K562 (cell line): ENCODE measurements at regions of chr5 and their contacts with region 1.

Region 1: DNA sequence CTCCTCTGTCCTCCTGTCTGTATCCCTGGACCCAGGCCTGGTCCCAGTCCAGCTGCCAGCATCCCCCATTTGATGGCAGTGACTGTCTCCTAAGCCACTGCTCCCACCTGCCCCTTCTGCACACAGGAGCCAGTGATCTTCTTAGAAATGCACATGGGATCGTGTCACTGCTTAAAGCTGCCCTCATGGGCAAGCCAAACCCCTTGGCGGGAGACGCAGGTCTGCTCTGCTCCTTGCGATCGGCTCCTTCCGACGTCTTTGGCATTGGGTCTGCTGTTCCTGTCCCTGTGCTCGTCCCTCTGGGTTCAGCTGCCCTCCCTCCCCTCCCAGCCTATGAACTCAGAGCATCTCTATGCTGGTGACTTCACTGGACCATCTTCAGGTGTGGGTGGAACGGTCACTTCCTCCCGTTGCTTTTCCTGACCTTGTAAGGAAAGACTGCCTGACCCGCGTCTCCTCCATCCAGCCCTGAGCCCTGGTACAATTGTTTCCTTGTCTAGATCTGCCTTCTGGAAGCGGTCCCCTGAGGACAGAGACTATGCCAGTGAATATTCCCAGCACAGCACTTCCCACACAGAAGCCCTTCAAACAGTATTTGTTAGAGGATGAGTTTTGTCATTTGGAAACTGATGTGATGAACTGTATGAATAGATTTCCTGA is 116.5 kb downstream of the ZNF354C start:
- DNase-seq: no peak
- ATAC-seq: no peak
- H3K4me3 ChIP-seq: no peak overlapping the region
- H3K27ac ChIP-seq: no peak overlapping the region
- H3K4me1 ChIP-seq: no peaks in the 10 kb centered on the region
- H3K27me3 ChIP-seq: peaks cover 9 to 43% of the 10 kb centered on the region in 2 experiments
- CTCF ChIP-seq: no peak
- EP300 ChIP-seq: no peak
- POLR2A ChIP-seq: no peak
- RAD21 ChIP-seq: no peak

Region 2: GRCh38 chr5:179355976-179356974 is 179.6 kb after region 1 on chr5:
- CTCF ChIA-PET with region 1: no interaction called
- POLR2A ChIA-PET with region 1: no interaction called
- in situ Hi-C with region 1: no loop called
- intact Hi-C with region 1: no loop called
- DNase-seq: no peak
- ATAC-seq: no peak
- H3K4me3 ChIP-seq: no peak overlapping the region
- H3K27ac ChIP-seq: no peak overlapping the region
- H3K4me1 ChIP-seq: no peaks in the 10 kb centered on the region
- H3K27me3 ChIP-seq: peaks cover 4 to 33% of the 10 kb centered on the region in 2 experiments; a peak in 3 of 5 replicates
- CTCF ChIP-seq: no peak
- EP300 ChIP-seq: no peak
- POLR2A ChIP-seq: no peak
- RAD21 ChIP-seq: no peak

Region 3: DNA sequence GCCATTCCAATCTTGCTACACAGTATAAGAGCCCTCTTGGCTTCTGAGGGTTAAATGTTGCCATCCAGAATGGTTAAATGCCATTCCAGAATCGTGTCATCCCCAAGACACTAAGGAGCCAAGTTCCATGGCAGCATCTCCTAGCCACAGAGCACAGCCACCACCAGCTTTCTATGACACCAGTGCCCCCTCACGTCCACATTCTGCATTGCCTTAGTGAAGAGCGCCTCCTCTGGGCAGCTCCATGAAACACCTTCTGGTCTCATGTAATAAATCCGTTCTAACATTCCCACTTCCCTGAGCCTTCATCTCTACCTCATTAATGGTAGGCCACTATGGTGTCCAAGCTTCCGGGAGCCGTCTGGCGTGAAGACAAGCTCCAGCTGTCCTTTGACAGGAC is 491.7 kb after region 1 on chr5:
- CTCF ChIA-PET with region 1: no interaction called
- POLR2A ChIA-PET with region 1: interaction called, 3 read pairs
- in situ Hi-C with region 1: loop called (anchors 10 kb)
- intact Hi-C with region 1: no loop called
- DNase-seq: peak; percentile 68 to 81 (median 74)
- ATAC-seq: peak; percentile 96
- H3K4me3 ChIP-seq: no peak overlapping the region
- H3K27ac ChIP-seq: no peak overlapping the region
- H3K4me1 ChIP-seq: peaks cover 0 to 2% of the 10 kb centered on the region in 2 experiments; a peak in 3 of 5 replicates
- H3K27me3 ChIP-seq: no peaks in the 10 kb centered on the region
- CTCF ChIP-seq: peak; percentile 100
- EP300 ChIP-seq: no peak
- POLR2A ChIP-seq: no peak
- RAD21 ChIP-seq: peak; percentile 73 to 92